ENCODE measurements at regions of chr16 and their contacts with region 1.

Region 1: GRCh38 chr16:578870-579405 is 9.2 kb downstream of the PIGQ start:
- DNase-seq: peak; percentile 66 to 80 (median 71)
- H3K4me3 ChIP-seq: no peak overlapping the region
- H3K4me3 Mint-ChIP-seq: no peak overlapping the region
- H3K27ac ChIP-seq: no peak overlapping the region
- H3K27ac Mint-ChIP-seq: no peak overlapping the region
- H3K4me1 ChIP-seq: no peaks in the 10 kb centered on the region
- H3K4me1 Mint-ChIP-seq: peaks cover 2% of the 10 kb centered on the region
- H3K27me3 ChIP-seq: no peaks in the 10 kb centered on the region
- H3K27me3 Mint-ChIP-seq: no peaks in the 10 kb centered on the region
- CTCF ChIP-seq: peak; percentile 83

Region 2: DNA sequence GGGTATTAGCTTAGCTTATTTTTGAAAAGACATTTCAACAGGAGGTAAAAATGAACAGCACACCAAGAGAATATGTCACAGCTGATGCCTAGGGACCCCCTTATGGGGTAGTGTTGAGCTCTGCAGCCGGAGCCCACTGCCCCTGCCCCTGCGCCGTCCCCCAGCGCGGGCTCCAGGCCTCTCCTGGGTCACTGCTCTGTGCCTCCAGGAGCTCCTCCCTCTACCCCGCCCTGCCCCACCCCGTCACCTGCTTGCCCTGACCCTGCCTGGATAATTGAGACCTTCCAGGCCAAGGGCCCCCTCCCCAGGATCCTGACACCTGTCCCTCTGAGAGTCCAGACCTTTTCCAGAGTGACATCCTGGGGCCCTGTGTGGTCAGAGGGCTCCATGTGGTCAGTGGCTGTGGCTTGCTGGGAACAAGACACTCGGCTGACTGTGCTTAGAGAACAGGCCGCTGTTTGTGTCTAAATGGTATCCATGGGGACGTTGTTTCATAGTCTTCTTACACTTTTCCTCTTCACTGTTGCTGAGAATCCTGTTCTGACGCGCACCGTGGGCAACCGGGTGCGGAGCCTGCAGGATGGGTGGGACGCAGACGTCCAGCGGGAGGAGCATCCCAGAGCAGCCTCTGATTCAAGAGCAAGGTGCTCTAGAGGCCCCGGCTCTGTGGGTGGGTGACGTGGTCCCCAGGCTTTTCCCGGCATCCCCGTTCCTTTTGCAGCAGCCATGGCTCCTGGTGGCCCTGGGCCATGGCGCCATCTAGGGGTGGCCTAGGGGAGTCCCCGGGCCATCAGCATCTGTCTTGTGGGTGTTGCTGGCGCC is 31.8 kb after region 1 on chr16:
- intact Hi-C with region 1: loop called (anchors 2 to 5 kb)
- DNase-seq: peak; percentile 41 to 59 (median 55)
- H3K4me3 ChIP-seq: no peak overlapping the region
- H3K4me3 Mint-ChIP-seq: no peak overlapping the region
- H3K27ac ChIP-seq: no peak overlapping the region
- H3K27ac Mint-ChIP-seq: peak overlapping the region in 4 of 7 donors; percentile 9 to 50 (median 34)
- H3K4me1 ChIP-seq: no peaks in the 10 kb centered on the region
- H3K4me1 Mint-ChIP-seq: peaks cover 6% of the 10 kb centered on the region
- H3K27me3 ChIP-seq: no peaks in the 10 kb centered on the region
- H3K27me3 Mint-ChIP-seq: peaks cover 0 to 2% (median 0%) of the 10 kb centered on the region in 3 donors
- CTCF ChIP-seq: peak; percentile 81

Region 3: GRCh38 chr16:660459-661183 is 81.7 kb after region 1 on chr16:
- intact Hi-C with region 1: loop called in 1 of 2 experiments (anchors 5 kb)
- DNase-seq: peak; percentile 91 to 94 (median 93)
- H3K4me3 ChIP-seq: peak overlapping the region; percentile 4 to 65 (median 27)
- H3K4me3 Mint-ChIP-seq: peak overlapping the region; percentile 65 to 73
- H3K27ac ChIP-seq: peak overlapping the region in 1 of 2 donors; percentile 40
- H3K27ac Mint-ChIP-seq: peak overlapping the region in 3 of 7 donors; percentile 8 to 30 (median 24)
- H3K4me1 ChIP-seq: peaks cover 11 to 16% of the 10 kb centered on the region in 2 donors
- H3K4me1 Mint-ChIP-seq: peaks cover 10% of the 10 kb centered on the region
- H3K27me3 ChIP-seq: no peaks in the 10 kb centered on the region
- H3K27me3 Mint-ChIP-seq: peaks cover 0 to 3% (median 2%) of the 10 kb centered on the region in 3 donors
- CTCF ChIP-seq: peak; percentile 72